Sigmoid colon (tissue), 7 donors: ENCODE measurements at regions of chr15 and their contacts with region 1.

Region 1: DNA sequence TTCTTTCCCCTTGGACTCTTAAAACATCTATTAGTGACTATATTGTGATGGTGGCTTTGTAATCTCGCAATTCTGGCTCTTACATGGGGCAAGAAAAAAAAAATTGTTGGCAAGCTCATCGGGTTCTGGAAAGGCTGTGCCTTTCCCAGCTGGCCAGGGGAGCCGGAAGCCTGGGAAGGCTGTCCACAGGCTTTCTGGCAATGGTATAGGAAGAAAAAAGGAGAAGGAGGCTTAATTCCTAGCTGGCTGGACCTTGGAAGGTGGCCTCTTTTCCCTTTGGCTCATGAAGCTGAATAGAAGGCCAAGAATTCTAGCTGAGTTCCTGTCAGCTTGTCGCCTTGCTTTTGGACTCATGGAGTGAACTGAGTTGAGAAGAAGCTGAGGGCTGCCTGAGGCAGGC is 243.5 kb upstream of the SEMA6D start:
- DNase-seq: peak; percentile 81
- H3K4me3 ChIP-seq: no peak overlapping the region
- H3K27ac ChIP-seq: peak overlapping the region in 3 of 4 donors; percentile 10 to 49 (median 20)
- H3K4me1 ChIP-seq: peaks cover 0 to 20% (median 11%) of the 10 kb centered on the region in 4 donors
- H3K27me3 ChIP-seq: no peaks in the 10 kb centered on the region
- CTCF ChIP-seq: no peak
- EP300 ChIP-seq: no peak
- POLR2A ChIP-seq: no peak

Region 2: DNA sequence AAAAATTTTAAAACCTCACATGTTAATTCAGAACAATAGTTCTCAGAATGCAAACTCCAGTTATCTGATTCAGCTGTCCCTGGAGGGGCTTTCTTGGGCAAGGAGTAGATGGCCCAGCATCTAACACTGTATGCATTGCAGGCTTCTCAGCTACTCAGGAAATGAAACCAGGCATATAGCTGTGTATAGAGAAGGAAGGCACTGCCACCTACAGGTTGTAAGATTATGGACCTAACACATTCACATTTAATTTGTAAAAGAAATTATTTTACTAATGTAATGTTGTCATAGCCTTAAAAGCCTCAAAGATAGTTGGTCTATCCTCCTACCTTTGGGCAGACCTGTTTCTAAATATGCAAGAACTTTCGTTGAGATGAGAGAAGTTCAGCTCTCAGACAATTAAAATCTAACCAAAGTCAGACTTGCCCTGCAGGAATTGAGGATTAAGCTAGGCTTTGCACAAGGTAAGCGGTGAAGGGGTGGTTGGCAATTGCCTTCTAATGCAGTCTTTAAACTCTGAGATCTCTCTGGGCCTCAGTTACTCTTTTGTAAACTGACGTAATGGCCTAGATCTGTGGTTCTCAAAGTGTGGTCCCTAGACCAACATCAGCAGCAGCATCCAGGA is 514.2 kb after region 1 on chr15:
- intact Hi-C with region 1: loop called (anchors 10 kb)
- DNase-seq: no peak
- H3K4me3 ChIP-seq: no peak overlapping the region
- H3K27ac ChIP-seq: no peak overlapping the region
- H3K4me1 ChIP-seq: no peaks in the 10 kb centered on the region
- H3K27me3 ChIP-seq: no peaks in the 10 kb centered on the region
- CTCF ChIP-seq: peak; percentile 41 to 62 (median 45)
- EP300 ChIP-seq: no peak
- POLR2A ChIP-seq: no peak